Endothelial cell of umbilical vein (primary cell): ENCODE measurements at regions of chr10 and their contacts with region 1.

Region 1: GRCh38 chr10:63157845-63158624 is 24.9 kb downstream of the NRBF2 start:
- DNase-seq: peak; percentile 74
- H3K4me3 ChIP-seq: no peak overlapping the region
- H3K27ac ChIP-seq: no peak overlapping the region
- H3K4me1 ChIP-seq: no peaks in the 10 kb centered on the region
- H3K27me3 ChIP-seq: no peaks in the 10 kb centered on the region
- CTCF ChIP-seq: peak; percentile 65 to 71
- POLR2A ChIP-seq: no peak

Region 2: GRCh38 chr10:62437696-62438095 is 720.3 kb before region 1 on chr10:
- CTCF ChIA-PET with region 1: interaction called, 26 read pairs
- POLR2A ChIA-PET with region 1: no interaction called
- dilution Hi-C with region 1: no loop called
- intact Hi-C with region 1: loop called (anchors 1 kb)
- DNase-seq: peak; percentile 73
- H3K4me3 ChIP-seq: no peak overlapping the region
- H3K27ac ChIP-seq: no peak overlapping the region
- H3K4me1 ChIP-seq: peaks cover 14% of the 10 kb centered on the region
- H3K27me3 ChIP-seq: no peaks in the 10 kb centered on the region
- CTCF ChIP-seq: peak; percentile 54 to 58
- POLR2A ChIP-seq: no peak

Region 3: DNA sequence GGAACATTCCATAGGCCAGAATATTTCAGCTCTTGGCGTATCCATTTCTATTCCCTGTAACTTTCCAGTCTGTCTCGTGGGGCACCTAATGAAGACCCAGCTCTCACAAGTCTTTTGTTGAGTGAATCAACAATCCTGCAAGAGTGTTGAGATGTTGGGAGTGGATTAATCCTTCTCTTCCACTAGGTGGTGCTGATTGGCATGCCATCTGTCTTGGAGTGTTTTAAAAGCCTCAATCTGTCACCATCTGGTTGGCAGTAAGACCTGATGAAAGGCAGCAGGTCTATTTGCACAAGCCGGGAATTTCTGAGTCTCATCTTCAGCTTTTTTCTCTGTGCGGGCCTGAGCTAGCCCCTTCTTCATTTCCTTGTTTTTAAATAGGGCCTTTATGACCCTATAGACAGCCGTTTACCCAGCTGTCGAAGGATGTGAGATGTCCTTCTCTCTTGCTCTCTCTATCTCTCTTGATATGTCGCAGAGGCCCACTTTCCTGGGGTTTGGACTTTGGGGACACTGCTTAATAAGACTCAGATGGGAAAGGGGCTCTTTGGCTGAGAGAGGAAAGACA is 603.3 kb before region 1 on chr10:
- CTCF ChIA-PET with region 1: interaction called, 9 read pairs
- POLR2A ChIA-PET with region 1: no interaction called
- dilution Hi-C with region 1: no loop called
- intact Hi-C with region 1: loop called (anchors 1 kb)
- DNase-seq: peak; percentile 13
- H3K4me3 ChIP-seq: no peak overlapping the region
- H3K27ac ChIP-seq: no peak overlapping the region
- H3K4me1 ChIP-seq: no peaks in the 10 kb centered on the region
- H3K27me3 ChIP-seq: no peaks in the 10 kb centered on the region
- CTCF ChIP-seq: peak; percentile 35 to 39
- POLR2A ChIP-seq: no peak

Region 4: GRCh38 chr10:62610649-62611229 is 547.3 kb before region 1 on chr10:
- CTCF ChIA-PET with region 1: interaction called, 66 read pairs
- POLR2A ChIA-PET with region 1: no interaction called
- dilution Hi-C with region 1: no loop called
- intact Hi-C with region 1: loop called (anchors 1 kb)
- DNase-seq: peak; percentile 41
- H3K4me3 ChIP-seq: no peak overlapping the region
- H3K27ac ChIP-seq: no peak overlapping the region
- H3K4me1 ChIP-seq: no peaks in the 10 kb centered on the region
- H3K27me3 ChIP-seq: peaks cover 2 to 5% of the 10 kb centered on the region in 2 experiments
- CTCF ChIP-seq: peak; percentile 56 to 82
- POLR2A ChIP-seq: no peak

Region 5: DNA sequence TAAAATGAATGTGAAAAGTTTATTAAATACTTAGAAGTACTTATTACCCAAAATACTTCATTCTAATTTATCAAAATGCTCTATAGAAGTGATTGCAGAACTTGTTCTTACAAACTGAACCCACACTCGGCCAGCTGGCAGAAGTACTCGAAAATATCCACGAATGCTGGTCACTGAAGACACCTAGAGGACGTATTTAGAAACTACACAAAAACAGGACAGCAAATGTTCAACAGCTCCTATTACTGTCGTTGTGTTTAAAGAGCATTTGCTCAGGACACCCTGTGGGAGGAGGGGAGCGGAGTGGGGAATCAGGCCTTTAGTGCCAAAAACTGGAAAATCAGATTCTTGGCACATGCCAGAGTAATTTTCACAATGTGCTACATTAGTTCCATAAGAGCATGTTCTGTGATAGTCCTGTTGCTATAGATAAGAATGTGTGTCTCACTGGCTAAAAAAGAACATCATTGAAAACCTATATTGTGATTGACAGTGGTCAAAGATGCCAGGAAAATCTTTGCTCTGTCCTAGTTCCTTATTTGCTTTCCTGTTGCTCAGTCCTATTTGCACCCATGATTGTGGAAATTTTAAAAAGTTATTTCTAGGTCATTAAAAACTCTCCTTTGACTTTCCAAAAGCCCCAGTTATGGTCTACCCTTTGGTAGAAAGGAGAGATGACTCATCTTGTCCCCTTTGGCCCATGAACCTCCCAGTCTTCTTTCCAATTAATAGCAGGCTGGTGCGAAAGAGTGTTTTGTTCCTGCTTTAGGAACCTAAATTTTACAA is 73.9 kb before region 1 on chr10:
- CTCF ChIA-PET with region 1: interaction called, 15 read pairs
- POLR2A ChIA-PET with region 1: no interaction called
- dilution Hi-C with region 1: no loop called
- intact Hi-C with region 1: no loop called
- DNase-seq: peak; percentile 67
- H3K4me3 ChIP-seq: no peak overlapping the region
- H3K27ac ChIP-seq: no peak overlapping the region
- H3K4me1 ChIP-seq: no peaks in the 10 kb centered on the region
- H3K27me3 ChIP-seq: no peaks in the 10 kb centered on the region
- CTCF ChIP-seq: peak; percentile 31 to 46
- POLR2A ChIP-seq: no peak

Region 6: GRCh38 chr10:63145782-63146181 is 12.3 kb before region 1 on chr10:
- CTCF ChIA-PET with region 1: interaction called, 26 read pairs
- POLR2A ChIA-PET with region 1: no interaction called
- dilution Hi-C with region 1: no loop called
- intact Hi-C with region 1: no loop called
- DNase-seq: no peak
- H3K4me3 ChIP-seq: no peak overlapping the region
- H3K27ac ChIP-seq: no peak overlapping the region
- H3K4me1 ChIP-seq: no peaks in the 10 kb centered on the region
- H3K27me3 ChIP-seq: no peaks in the 10 kb centered on the region
- CTCF ChIP-seq: no peak
- POLR2A ChIP-seq: no peak